ENCODE measurements at regions of chr15 and their contacts with region 1.

Region 1: GRCh38 chr15:79184465-79184892 is 93.9 kb upstream of the RASGRF1 start:
- DNase-seq: peak; percentile 62 to 83 (median 77)
- H3K4me3 ChIP-seq: no peak overlapping the region
- H3K27ac ChIP-seq: no peak overlapping the region
- H3K4me1 ChIP-seq: no peaks in the 10 kb centered on the region
- H3K27me3 ChIP-seq: no peaks in the 10 kb centered on the region
- CTCF ChIP-seq: peak; percentile 73 to 96 (median 91)
- EP300 ChIP-seq: no peak
- POLR2A ChIP-seq: no peak

Region 2: GRCh38 chr15:78618490-78618934 is 566.0 kb before region 1 on chr15:
- intact Hi-C with region 1: loop called in 3 of 4 experiments (anchors 5 to 10 kb)
- DNase-seq: peak; percentile 81 to 89 (median 83)
- H3K4me3 ChIP-seq: no peak overlapping the region
- H3K27ac ChIP-seq: no peak overlapping the region
- H3K4me1 ChIP-seq: peaks cover 2% of the 10 kb centered on the region
- H3K27me3 ChIP-seq: no peaks in the 10 kb centered on the region
- CTCF ChIP-seq: peak; percentile 54 to 88 (median 86)
- EP300 ChIP-seq: no peak
- POLR2A ChIP-seq: no peak

Region 3: DNA sequence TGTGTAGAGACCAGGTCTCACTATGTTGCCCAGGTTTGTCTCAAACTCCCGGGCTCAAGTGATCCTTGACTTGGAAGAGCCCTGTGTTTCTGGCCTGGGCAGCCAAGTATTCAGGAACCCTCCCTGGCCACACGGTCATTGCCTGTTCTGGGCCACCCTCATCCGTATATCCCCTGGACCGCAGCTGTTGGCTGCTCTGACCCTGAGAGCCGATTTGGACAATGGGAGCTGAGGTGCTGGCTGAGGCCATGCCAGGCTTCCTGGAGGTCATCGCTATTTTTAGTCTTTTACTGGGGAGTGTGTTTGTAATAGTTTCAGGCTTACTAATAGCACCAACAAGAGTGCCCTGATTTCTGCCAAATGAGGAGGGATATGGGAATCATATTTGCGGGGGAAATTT is 433.9 kb before region 1 on chr15:
- intact Hi-C with region 1: loop called in 1 of 4 experiments (anchors 10 kb)
- DNase-seq: peak in 2 of 5 donors; percentile 26 to 32
- H3K4me3 ChIP-seq: no peak overlapping the region
- H3K27ac ChIP-seq: no peak overlapping the region
- H3K4me1 ChIP-seq: peaks cover 4% of the 10 kb centered on the region
- H3K27me3 ChIP-seq: no peaks in the 10 kb centered on the region
- CTCF ChIP-seq: no peak
- EP300 ChIP-seq: no peak
- POLR2A ChIP-seq: no peak

Region 4: GRCh38 chr15:78909791-78910228 is 274.7 kb before region 1 on chr15:
- intact Hi-C with region 1: loop called in 1 of 4 experiments (anchors 10 kb)
- DNase-seq: peak in 2 of 5 donors; percentile 44 to 58
- H3K4me3 ChIP-seq: no peak overlapping the region
- H3K27ac ChIP-seq: no peak overlapping the region
- H3K4me1 ChIP-seq: peaks cover 4% of the 10 kb centered on the region
- H3K27me3 ChIP-seq: no peaks in the 10 kb centered on the region
- CTCF ChIP-seq: peak; percentile 37 to 68 (median 46)
- EP300 ChIP-seq: no peak
- POLR2A ChIP-seq: no peak

Region 5: DNA sequence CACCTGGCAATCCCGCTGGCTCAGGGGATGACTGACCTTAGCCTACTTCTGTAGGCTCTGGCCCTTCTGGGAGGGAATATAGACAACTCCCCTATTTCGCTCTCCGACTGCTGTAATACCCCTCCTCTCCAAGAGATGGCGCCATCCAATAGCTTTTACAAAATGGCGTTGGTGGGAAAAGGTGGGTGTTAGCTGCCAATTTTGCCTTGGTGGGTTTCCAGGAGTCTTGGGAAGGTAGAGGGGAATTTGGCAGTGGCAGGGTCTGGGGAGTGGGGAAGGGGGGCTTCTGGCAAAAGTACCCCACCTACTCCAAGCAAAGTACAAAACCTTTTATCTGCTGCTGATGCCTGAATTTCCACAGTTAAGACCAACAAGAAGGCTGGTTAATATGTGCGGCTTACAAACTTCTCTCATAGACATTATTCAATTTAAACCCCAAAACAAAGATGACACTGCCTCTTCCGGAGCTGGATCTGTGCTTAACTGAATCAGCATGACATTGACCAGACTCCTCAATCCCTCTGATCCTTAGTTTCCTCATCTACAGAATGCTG is 156.0 kb before region 1 on chr15:
- intact Hi-C with region 1: loop called in 2 of 4 experiments (anchors 2 to 10 kb)
- DNase-seq: peak in 1 of 5 donors; percentile 53
- H3K4me3 ChIP-seq: no peak overlapping the region
- H3K27ac ChIP-seq: no peak overlapping the region
- H3K4me1 ChIP-seq: no peaks in the 10 kb centered on the region
- H3K27me3 ChIP-seq: no peaks in the 10 kb centered on the region
- CTCF ChIP-seq: peak in 1 of 3 donors; percentile 22
- EP300 ChIP-seq: no peak
- POLR2A ChIP-seq: no peak

Region 6: GRCh38 chr15:79035111-79035601 is 149.3 kb before region 1 on chr15:
- intact Hi-C with region 1: loop called in 1 of 4 experiments (anchors 10 kb)
- DNase-seq: no peak
- H3K4me3 ChIP-seq: no peak overlapping the region
- H3K27ac ChIP-seq: no peak overlapping the region
- H3K4me1 ChIP-seq: no peaks in the 10 kb centered on the region
- H3K27me3 ChIP-seq: no peaks in the 10 kb centered on the region
- CTCF ChIP-seq: no peak
- EP300 ChIP-seq: no peak
- POLR2A ChIP-seq: no peak

Measured in ovary (tissue), 10 donors.